MCF 10A (cell line): ENCODE measurements at regions of chr12 and their contacts with region 1.

Region 1: GRCh38 chr12:85836197-85837090 is at the start of gene RASSF9:
- DNase-seq: peak; percentile 91
- H3K4me3 Mint-ChIP-seq: peak within 1 kb of the TSS; percentile 85
- H3K27ac Mint-ChIP-seq: peak within 1 kb of the TSS; percentile 96
- H3K4me1 Mint-ChIP-seq: peaks cover 19% of the 10 kb centered on the region
- H3K27me3 Mint-ChIP-seq: no peaks in the 10 kb centered on the region
- CTCF ChIP-seq: no peak
- total RNA-seq, gene RASSF9: 1.5 and 2.1 TPM in 2 replicates

Region 2: GRCh38 chr12:85476756-85477155 is 359.7 kb before region 1 on chr12:
- CTCF ChIA-PET with region 1: interaction called, 11 read pairs
- POLR2A ChIA-PET with region 1: no interaction called
- intact Hi-C with region 1: no loop called
- DNase-seq: no peak
- H3K4me3 Mint-ChIP-seq: no peak overlapping the region
- H3K27ac Mint-ChIP-seq: no peak overlapping the region
- H3K4me1 Mint-ChIP-seq: no peaks in the 10 kb centered on the region
- H3K27me3 Mint-ChIP-seq: no peaks in the 10 kb centered on the region
- CTCF ChIP-seq: no peak

Region 3: GRCh38 chr12:85821759-85822158 is 14.7 kb before region 1 on chr12:
- CTCF ChIA-PET with region 1: interaction called, 4 read pairs
- POLR2A ChIA-PET with region 1: interaction called, 20 read pairs
- intact Hi-C with region 1: no loop called
- DNase-seq: no peak
- H3K4me3 Mint-ChIP-seq: no peak overlapping the region
- H3K27ac Mint-ChIP-seq: no peak overlapping the region
- H3K4me1 Mint-ChIP-seq: peaks cover 17% of the 10 kb centered on the region
- H3K27me3 Mint-ChIP-seq: no peaks in the 10 kb centered on the region
- CTCF ChIP-seq: no peak